RWPE1 (cell line): ENCODE measurements at regions of chr15 and their contacts with region 1.

Region 1: GRCh38 chr15:93830181-93831080 is 400.9 kb upstream of the MCTP2 start:
- DNase-seq: no peak
- H3K27ac ChIP-seq: peak overlapping the region; percentile 68; the same call in 1 of the 2 replicates
- CTCF ChIP-seq: no peak

Region 2: GRCh38 chr15:93709708-93710107 is 120.7 kb before region 1 on chr15:
- CTCF ChIA-PET with region 1: no interaction called
- POLR2A ChIA-PET with region 1: interaction called, 16 read pairs
- DNase-seq: peak; percentile 46
- H3K27ac ChIP-seq: no peak overlapping the region
- CTCF ChIP-seq: no peak